ENCODE measurements at regions of chr14 and their contacts with region 1.

Region 1: GRCh38 chr14:65206448-65207096 is 104.3 kb upstream of the MAX start:
- DNase-seq: peak; percentile 82
- ATAC-seq: peak; percentile 59
- H3K4me3 ChIP-seq: peak overlapping the region in 4 of 5 experiments; percentile 1 to 41 (median 24)
- H3K4me3 Mint-ChIP-seq: peak overlapping the region; percentile 79
- H3K27ac ChIP-seq: peak overlapping the region; percentile 91
- H3K27ac Mint-ChIP-seq: peak overlapping the region; percentile 90
- H3K4me1 ChIP-seq: peaks cover 86 to 88% of the 10 kb centered on the region in 2 donors
- H3K4me1 Mint-ChIP-seq: peaks cover 82% of the 10 kb centered on the region
- H3K27me3 ChIP-seq: no peaks in the 10 kb centered on the region
- H3K27me3 Mint-ChIP-seq: no peaks in the 10 kb centered on the region
- CTCF ChIP-seq: no peak

Region 2: DNA sequence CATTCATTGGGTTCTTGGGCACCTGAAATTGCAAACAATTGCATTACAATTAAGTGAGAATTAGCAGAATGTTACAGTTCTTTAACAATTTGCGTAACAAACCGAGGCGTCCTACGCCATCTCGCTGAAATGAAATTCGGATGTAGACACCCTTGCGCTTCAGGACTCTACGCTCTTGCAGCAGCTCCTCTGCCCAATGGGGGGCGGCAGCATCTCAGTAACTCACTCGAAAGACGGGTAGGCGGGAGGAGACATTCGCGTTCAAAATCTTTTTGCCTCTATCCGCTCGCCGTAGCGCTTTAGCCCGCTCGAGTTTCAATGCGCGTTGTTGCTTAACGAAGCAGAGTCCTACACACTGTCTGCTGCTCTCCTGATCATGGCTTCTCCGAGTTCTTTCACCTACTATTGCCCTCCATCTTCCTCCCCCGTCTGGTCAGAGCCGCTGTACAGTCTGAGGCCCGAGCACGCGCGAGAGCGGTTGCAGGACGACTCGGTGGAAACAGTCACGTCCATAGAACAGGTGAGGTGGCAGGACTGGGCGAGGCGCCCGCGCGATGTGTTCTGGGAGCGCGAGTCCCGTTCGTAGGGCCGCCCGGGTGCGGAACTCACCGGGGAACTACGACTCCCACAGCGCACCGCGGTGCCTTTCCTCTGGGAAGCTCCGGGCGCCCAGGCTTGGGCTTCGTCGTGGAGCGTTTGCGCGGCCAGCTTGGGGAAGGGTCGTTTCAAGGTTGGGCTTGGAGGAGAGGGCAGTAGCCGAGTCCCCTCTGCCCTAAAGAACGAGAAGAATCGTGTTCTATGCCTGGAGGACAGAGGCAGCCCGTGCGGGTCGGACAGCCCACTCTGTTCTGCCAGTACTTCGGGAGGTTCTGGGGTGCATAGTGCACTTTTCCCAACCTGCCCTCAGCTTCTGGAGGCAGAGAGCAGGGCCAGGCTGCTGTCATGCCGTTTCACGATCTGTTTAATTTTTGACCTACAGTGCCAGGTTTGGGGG is 219.7 kb before region 1 on chr14 and contains the start of gene FNTB:
- CTCF ChIA-PET with region 1: no interaction called
- POLR2A ChIA-PET with region 1: no interaction called
- intact Hi-C with region 1: loop called (anchors 5 kb)
- DNase-seq: peak; percentile 98
- ATAC-seq: peak; percentile 90
- H3K4me3 ChIP-seq: peak within 1 kb of the TSS; percentile 63 to 92 (median 84)
- H3K4me3 Mint-ChIP-seq: peak within 1 kb of the TSS; percentile 100
- H3K27ac ChIP-seq: peak within 1 kb of the TSS; percentile 65 to 70
- H3K27ac Mint-ChIP-seq: peak within 1 kb of the TSS; percentile 98
- H3K4me1 ChIP-seq: peaks cover 25% of the 10 kb centered on the region in 2 donors
- H3K4me1 Mint-ChIP-seq: peaks cover 41% of the 10 kb centered on the region
- H3K27me3 ChIP-seq: peaks cover 0 to 6% (median 3%) of the 10 kb centered on the region in 4 experiments
- H3K27me3 Mint-ChIP-seq: peaks cover 18% of the 10 kb centered on the region
- CTCF ChIP-seq: peak; percentile 79
- total RNA-seq, gene FNTB: 7.7 and 10.2 TPM in 2 replicates

Region 3: GRCh38 chr14:65170768-65171507 is 35.6 kb before region 1 on chr14:
- CTCF ChIA-PET with region 1: interaction called, 36 read pairs
- POLR2A ChIA-PET with region 1: interaction called, 17 read pairs
- intact Hi-C with region 1: loop called (anchors 2 kb)
- DNase-seq: peak; percentile 72
- ATAC-seq: peak; percentile 50
- H3K4me3 ChIP-seq: peak overlapping the region; percentile 42 to 74 (median 64)
- H3K4me3 Mint-ChIP-seq: peak overlapping the region; percentile 86
- H3K27ac ChIP-seq: peak overlapping the region in 1 of 2 donors; percentile 23
- H3K27ac Mint-ChIP-seq: peak overlapping the region; percentile 88
- H3K4me1 ChIP-seq: peaks cover 14 to 35% of the 10 kb centered on the region in 2 donors
- H3K4me1 Mint-ChIP-seq: peaks cover 55% of the 10 kb centered on the region
- H3K27me3 ChIP-seq: no peaks in the 10 kb centered on the region
- H3K27me3 Mint-ChIP-seq: no peaks in the 10 kb centered on the region
- CTCF ChIP-seq: peak; percentile 40

Region 4: DNA sequence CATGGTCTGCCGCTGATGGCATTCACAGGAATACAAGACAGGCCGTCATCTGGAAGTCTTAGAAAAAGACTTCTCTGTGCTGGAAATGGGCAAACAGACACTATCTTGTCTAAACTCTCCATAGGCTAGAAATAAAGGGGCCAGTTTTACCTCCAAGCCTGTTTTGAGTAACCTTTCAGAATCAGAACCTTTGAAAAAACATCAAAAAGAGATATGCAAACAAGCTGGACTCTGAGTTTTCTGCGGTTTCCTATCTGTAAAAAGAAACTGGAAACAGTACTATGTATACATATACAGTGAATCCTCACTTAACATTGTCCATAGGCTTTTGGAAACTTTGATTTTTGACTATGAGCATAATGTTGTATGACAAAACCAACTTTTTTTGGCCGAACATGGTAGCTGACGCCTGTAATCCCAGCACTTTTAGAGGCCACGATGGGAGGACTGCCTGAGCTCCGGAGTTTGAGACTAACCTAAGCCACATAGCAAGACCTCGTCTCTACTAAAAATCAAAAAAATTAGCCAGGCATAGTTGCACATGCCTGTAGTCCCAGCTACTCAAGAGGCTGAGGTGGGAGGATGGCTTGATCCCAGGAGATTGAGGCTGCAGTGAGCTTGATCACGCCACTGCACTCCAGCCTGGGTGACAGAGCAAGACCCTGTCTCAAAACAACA is 11.4 kb before region 1 on chr14:
- CTCF ChIA-PET with region 1: interaction called, 14 read pairs
- POLR2A ChIA-PET with region 1: interaction called, 24 read pairs
- intact Hi-C with region 1: loop called (anchors 1 kb)
- DNase-seq: peak; percentile 36
- ATAC-seq: peak; percentile 76
- H3K4me3 ChIP-seq: peak overlapping the region in 4 of 5 experiments; percentile 0 to 42 (median 28)
- H3K4me3 Mint-ChIP-seq: peak overlapping the region; percentile 84
- H3K27ac ChIP-seq: peak overlapping the region; percentile 29 to 35
- H3K27ac Mint-ChIP-seq: peak overlapping the region; percentile 91
- H3K4me1 ChIP-seq: peaks cover 19 to 23% of the 10 kb centered on the region in 2 donors
- H3K4me1 Mint-ChIP-seq: peaks cover 44% of the 10 kb centered on the region
- H3K27me3 ChIP-seq: no peaks in the 10 kb centered on the region
- H3K27me3 Mint-ChIP-seq: no peaks in the 10 kb centered on the region
- CTCF ChIP-seq: no peak

Region 5: DNA sequence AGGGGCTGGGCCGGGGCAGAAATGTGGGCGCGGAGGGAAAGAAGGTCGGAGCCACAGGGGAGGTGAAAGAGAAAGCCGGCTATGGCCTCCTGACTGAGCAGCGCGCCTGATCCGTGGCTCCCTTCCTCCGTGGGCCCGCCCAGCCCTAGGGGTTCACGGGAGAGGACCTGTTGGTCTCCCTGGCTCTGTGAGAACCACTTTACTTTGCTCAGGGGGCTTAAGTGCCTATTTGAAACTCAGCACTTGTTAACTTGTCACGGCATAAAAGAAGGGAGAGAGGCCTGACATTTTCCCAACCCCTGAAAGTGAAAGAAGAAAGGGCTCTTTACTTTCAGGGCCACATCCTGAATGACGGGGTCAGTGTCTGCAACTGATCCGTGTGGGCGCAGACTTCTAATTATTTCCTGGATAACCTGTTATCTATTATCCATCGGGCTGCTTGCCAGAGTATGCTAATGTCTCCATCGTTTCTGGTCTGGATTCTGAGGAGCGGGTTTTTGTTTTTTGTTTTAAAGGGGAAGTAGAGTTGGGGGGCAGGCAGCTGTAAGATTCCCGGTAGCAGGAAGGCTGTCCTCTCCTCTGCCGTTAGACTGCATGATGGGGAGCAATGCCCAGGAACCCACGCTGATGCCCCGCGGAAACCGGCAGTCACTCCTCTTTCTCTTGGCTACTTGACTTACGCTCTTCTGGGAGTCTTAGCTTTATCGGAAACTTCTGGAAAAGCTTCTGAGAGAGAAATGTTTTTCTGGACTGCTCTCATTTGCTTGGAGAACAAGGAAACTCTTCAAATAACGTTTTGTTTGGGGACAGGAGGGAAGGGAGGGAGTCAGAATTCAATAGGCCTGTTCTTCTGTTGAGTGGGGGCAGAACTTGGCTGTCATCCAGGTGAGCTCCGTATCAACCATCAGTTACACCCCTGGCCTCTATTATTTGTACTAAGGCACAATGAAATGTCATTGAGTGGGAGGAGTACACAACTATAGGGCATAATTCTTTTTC is 23.5 kb after region 1 on chr14:
- CTCF ChIA-PET with region 1: interaction called, 7 read pairs
- POLR2A ChIA-PET with region 1: interaction called, 12 read pairs
- intact Hi-C with region 1: loop called (anchors 1 kb)
- DNase-seq: peak; percentile 59
- ATAC-seq: peak; percentile 50
- H3K4me3 ChIP-seq: peak overlapping the region; percentile 36 to 60 (median 58)
- H3K4me3 Mint-ChIP-seq: peak overlapping the region; percentile 90
- H3K27ac ChIP-seq: peak overlapping the region; percentile 74 to 83
- H3K27ac Mint-ChIP-seq: peak overlapping the region; percentile 95
- H3K4me1 ChIP-seq: peaks cover 63 to 71% of the 10 kb centered on the region in 2 donors
- H3K4me1 Mint-ChIP-seq: peaks cover 58% of the 10 kb centered on the region
- H3K27me3 ChIP-seq: no peaks in the 10 kb centered on the region
- H3K27me3 Mint-ChIP-seq: no peaks in the 10 kb centered on the region
- CTCF ChIP-seq: no peak

Region 6: GRCh38 chr14:65356327-65356852 is 149.8 kb after region 1 on chr14:
- CTCF ChIA-PET with region 1: no interaction called
- POLR2A ChIA-PET with region 1: interaction called, 5 read pairs
- intact Hi-C with region 1: loop called (anchors 5 kb)
- DNase-seq: no peak
- ATAC-seq: no peak
- H3K4me3 ChIP-seq: no peak overlapping the region
- H3K4me3 Mint-ChIP-seq: no peak overlapping the region
- H3K27ac ChIP-seq: peak overlapping the region; percentile 40 to 61
- H3K27ac Mint-ChIP-seq: peak overlapping the region; percentile 79
- H3K4me1 ChIP-seq: peaks cover 58 to 84% of the 10 kb centered on the region in 2 donors
- H3K4me1 Mint-ChIP-seq: peaks cover 73% of the 10 kb centered on the region
- H3K27me3 ChIP-seq: no peaks in the 10 kb centered on the region
- H3K27me3 Mint-ChIP-seq: no peaks in the 10 kb centered on the region
- CTCF ChIP-seq: no peak

Measured in B cell (primary cell).